MCF 10A (cell line): ENCODE measurements at regions of chr5 and their contacts with region 1.

Region 1: GRCh38 chr5:65721720-65722574 is at the starts of genes NLN and SGTB:
- DNase-seq: peak; percentile 78
- H3K4me3 Mint-ChIP-seq: peak within 1 kb of the TSS; percentile 89
- H3K27ac Mint-ChIP-seq: peak within 1 kb of the TSS; percentile 60
- H3K4me1 Mint-ChIP-seq: peaks cover 7% of the 10 kb centered on the region
- H3K27me3 Mint-ChIP-seq: no peaks in the 10 kb centered on the region
- CTCF ChIP-seq: no peak
- total RNA-seq, gene NLN: 24.6 and 42.1 TPM in 2 replicates
- total RNA-seq, gene SGTB: 15.8 and 27.6 TPM in 2 replicates

Region 2: DNA sequence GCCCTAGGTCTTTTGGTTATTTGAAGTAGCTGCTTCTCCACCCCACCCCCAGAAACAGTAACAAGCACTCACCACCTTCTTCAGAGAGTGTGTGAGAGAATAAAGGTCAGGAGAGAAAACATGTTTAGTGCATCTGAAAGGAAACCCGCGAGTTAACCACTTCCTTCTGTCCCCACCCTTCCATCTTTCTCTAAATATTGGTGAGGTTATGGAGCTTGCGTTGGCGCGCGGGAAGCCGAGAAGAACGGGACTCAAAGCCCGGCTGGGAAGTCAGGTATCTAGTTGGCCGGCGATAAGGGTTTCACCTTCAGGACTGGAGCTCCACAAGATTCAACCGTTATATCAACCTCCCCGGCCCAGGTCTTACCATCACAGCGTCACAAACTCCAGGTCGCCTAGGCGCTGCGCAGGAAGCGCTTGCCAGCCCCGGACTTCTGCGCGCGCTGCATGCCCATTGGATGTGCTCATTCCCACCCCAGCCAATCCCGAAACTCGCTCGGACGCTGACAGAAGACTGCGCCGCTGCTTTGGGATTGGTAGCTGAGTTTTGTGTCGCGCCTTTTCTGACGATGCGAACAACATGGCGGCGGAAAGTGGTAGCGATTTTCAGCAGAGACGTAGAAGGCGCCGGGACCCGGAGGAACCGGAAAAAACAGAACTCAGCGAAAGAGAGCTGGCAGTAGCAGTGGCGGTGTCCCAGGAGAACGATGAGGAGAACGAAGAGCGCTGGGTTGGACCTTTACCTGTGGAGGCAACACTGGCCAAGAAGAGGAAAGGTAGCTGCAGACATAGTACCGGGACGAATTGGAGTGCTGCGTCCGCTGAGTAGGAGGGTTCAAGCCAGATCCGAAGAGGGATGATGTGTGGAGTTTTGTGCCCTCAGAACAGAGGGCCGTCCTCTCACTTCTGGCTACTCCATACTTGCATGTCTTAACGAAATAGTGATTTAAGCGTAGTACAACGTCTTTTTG is 158.9 kb before region 1 on chr5 and contains the starts of genes CENPK and PPWD1:
- CTCF ChIA-PET with region 1: no interaction called
- POLR2A ChIA-PET with region 1: interaction called, 10 read pairs
- intact Hi-C with region 1: no loop called
- DNase-seq: peak; percentile 96
- H3K4me3 Mint-ChIP-seq: peak within 1 kb of the TSS; percentile 90
- H3K27ac Mint-ChIP-seq: peak within 1 kb of the TSS; percentile 96
- H3K4me1 Mint-ChIP-seq: peaks cover 25% of the 10 kb centered on the region
- H3K27me3 Mint-ChIP-seq: no peaks in the 10 kb centered on the region
- CTCF ChIP-seq: no peak
- total RNA-seq, gene CENPK: 11.2 and 15.3 TPM in 2 replicates
- total RNA-seq, gene PPWD1: 32.7 and 43.3 TPM in 2 replicates

Region 3: DNA sequence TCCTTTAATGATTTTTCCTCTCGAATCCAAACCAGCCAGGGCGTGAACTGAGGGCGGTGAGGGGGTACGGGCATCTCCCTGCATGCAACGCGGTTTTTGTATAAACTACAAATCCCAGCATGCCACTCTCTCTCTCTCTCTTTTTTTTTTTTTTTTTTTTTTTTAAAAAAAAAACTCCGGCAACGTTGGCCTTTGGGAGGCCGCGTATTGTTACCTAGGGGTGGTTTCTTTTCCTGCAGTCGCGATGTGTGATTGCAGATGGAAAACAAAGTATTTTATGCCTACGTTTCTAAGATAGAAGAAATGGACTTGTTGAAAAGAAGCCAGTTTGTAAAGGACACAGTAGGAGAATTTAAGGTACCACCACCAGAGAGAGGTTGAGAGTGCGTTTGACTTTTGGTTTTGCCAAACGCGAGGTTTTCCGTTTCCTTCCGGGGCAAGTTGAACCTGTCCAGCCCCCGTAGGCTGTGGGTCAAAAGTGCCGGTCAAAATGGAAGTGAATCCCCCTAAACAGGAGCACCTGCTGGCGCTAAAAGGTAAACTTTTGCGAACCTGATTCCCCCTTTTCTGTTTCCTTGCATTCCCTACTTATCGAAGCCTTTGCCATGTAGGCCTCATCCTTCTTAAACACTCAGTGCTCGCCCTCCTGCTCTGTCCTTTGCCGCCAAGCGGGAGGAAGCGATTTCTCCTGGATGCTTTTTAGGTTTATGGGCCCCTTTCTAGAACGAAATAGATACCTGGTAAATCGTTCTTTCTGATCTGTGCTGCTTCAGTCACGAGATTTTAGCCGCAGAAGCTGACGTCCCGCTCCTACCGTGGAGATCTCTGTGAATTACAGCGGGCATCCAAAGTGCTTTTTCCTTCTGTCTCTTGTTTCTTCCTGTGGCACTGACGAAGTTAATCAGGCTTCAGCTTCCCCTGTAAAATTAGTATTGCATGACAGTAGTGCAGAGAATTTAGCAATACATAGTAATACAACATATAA is 97.1 kb before region 1 on chr5 and contains the starts of genes SHLD3 and TRAPPC13:
- CTCF ChIA-PET with region 1: no interaction called
- POLR2A ChIA-PET with region 1: interaction called, 27 read pairs
- intact Hi-C with region 1: no loop called
- DNase-seq: peak; percentile 89
- H3K4me3 Mint-ChIP-seq: peak within 1 kb of the TSS; percentile 85
- H3K27ac Mint-ChIP-seq: peak within 1 kb of the TSS; percentile 97
- H3K4me1 Mint-ChIP-seq: peaks cover 7% of the 10 kb centered on the region
- H3K27me3 Mint-ChIP-seq: no peaks in the 10 kb centered on the region
- CTCF ChIP-seq: no peak
- total RNA-seq, gene SHLD3: 3.0 and 3.7 TPM in 2 replicates
- total RNA-seq, gene TRAPPC13: 28.4 and 39.9 TPM in 2 replicates

Region 4: DNA sequence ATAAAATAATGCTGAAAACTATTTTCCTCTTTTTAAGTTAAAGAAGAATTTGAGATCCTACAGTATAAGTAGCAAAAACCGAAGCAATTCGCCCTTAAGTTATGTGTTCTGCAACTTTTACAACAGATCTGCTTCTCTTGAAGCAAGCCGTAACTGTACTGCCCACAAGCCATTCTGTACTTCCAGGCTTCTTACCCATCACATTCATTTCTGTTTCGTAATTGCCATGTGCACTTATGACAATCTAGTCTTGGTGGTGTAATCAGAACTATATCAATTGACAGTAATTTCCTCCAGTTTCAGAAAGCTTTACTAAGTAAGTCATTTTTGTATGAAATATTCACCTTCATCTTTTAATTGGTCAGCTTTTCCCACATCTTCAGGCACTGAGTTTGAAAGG is 13.8 kb before region 1 on chr5:
- CTCF ChIA-PET with region 1: interaction called, 3 read pairs
- POLR2A ChIA-PET with region 1: interaction called, 21 read pairs
- intact Hi-C with region 1: no loop called
- DNase-seq: no peak
- H3K4me3 Mint-ChIP-seq: no peak overlapping the region
- H3K27ac Mint-ChIP-seq: no peak overlapping the region
- H3K4me1 Mint-ChIP-seq: no peaks in the 10 kb centered on the region
- H3K27me3 Mint-ChIP-seq: no peaks in the 10 kb centered on the region
- CTCF ChIP-seq: no peak

Region 5: DNA sequence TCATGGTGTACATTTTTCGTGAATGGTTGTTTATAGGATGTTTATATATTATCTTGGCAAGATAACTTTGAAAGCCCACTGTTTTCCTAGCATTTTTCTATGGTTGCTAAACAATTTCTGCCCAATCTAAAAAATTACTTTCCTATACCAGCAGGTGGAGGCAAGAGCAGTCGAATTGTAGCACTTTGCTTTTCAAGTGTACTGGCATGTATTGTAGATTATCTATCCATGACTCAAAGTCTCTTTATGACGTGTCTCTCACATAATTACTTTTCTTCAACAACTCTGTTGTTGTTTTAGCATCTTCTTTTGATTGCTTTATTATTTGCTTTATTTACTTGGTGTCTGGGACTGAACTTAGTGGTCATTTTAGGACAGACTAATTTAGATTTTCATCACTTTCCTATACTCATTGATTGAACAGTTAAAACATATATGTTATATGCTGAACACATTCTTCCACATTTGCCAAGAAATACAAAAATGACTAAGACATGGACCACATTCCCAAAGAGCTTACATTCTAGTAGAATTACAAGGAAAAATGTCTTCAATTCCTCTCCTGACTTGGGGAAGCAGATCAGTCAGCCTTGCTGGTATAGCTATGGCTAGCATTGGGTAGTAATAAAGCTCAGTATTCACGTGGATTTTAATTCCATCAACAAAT is 20.8 kb after region 1 on chr5:
- CTCF ChIA-PET with region 1: interaction called, 3 read pairs
- POLR2A ChIA-PET with region 1: interaction called, 18 read pairs
- intact Hi-C with region 1: no loop called
- DNase-seq: peak; percentile 72
- H3K4me3 Mint-ChIP-seq: no peak overlapping the region
- H3K27ac Mint-ChIP-seq: no peak overlapping the region
- H3K4me1 Mint-ChIP-seq: peaks cover 18% of the 10 kb centered on the region
- H3K27me3 Mint-ChIP-seq: no peaks in the 10 kb centered on the region
- CTCF ChIP-seq: peak; percentile 65

Region 6: DNA sequence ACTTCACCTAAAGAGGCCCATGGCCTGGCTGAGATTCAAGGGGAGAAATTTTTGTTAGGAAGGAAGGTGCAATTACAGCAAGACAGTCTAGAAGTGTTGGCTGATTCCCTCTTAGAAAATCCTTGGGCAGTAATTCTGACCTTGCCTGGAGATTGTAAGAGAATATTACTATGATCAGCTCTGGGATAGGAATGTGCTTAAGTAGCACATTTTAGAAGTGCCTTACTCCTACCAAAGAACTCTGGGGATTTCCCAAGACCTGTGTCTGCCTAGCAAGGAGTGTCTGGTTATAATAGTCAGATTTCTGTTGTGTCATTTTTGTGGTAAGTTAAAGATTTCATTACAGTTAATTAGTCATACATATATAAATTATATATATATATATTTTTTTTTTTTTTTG is 52.4 kb after region 1 on chr5:
- CTCF ChIA-PET with region 1: interaction called, 3 read pairs
- POLR2A ChIA-PET with region 1: interaction called, 22 read pairs
- intact Hi-C with region 1: no loop called
- DNase-seq: peak; percentile 74
- H3K4me3 Mint-ChIP-seq: no peak overlapping the region
- H3K27ac Mint-ChIP-seq: peak overlapping the region; percentile 59
- H3K4me1 Mint-ChIP-seq: peaks cover 11% of the 10 kb centered on the region
- H3K27me3 Mint-ChIP-seq: no peaks in the 10 kb centered on the region
- CTCF ChIP-seq: no peak

Region 7: DNA sequence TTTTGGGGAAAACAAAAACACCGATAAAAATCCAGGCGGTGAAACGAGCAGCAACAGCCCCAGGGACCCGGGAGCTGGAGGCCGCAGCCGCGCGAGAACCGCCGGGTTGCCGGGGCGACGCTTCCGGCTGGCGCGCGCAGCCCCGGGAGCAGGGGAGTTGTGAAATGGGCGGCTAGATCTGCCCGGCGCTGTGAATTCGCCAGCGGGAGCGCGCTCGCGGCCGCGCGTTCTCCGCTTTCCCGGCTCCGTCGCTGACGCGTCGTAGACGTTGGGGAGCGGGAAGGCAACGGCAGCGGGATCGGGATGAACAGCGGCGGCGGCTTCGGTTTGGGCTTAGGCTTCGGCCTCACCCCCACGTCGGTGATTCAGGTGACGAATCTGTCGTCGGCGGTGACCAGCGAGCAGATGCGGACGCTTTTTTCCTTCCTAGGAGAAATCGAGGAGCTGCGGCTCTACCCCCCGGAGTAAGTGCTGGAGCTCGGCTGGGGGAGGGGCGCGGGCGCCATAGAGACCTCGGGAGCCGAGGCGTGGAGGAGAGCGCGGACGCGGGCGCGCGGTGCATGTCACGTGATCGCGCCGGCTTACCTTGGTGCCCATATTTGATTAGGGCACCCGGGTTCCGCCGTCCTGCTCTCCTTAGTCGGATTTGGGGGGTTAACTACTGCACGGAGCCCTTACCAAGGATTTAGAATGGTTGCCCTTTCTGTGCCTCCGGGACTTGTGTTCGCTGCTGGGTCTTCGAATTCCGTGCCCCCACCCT is 422.3 kb after region 1 on chr5 and contains the start of gene SREK1:
- CTCF ChIA-PET with region 1: no interaction called
- POLR2A ChIA-PET with region 1: interaction called, 10 read pairs
- intact Hi-C with region 1: loop called (anchors 2 kb)
- DNase-seq: peak; percentile 91
- H3K4me3 Mint-ChIP-seq: peak within 1 kb of the TSS; percentile 85
- H3K27ac Mint-ChIP-seq: peak within 1 kb of the TSS; percentile 100
- H3K4me1 Mint-ChIP-seq: peaks cover 8% of the 10 kb centered on the region
- H3K27me3 Mint-ChIP-seq: no peaks in the 10 kb centered on the region
- CTCF ChIP-seq: no peak
- total RNA-seq, gene SREK1: 87.3 and 102 TPM in 2 replicates